Head of caudate nucleus (tissue), 42 donors: ENCODE measurements at regions of chr2 and their contacts with region 1.

Region 1: GRCh38 chr2:222860740-222861410 is at the start of gene ACSL3:
- DNase-seq: peak; percentile 96 to 99 (median 98)

Region 2: DNA sequence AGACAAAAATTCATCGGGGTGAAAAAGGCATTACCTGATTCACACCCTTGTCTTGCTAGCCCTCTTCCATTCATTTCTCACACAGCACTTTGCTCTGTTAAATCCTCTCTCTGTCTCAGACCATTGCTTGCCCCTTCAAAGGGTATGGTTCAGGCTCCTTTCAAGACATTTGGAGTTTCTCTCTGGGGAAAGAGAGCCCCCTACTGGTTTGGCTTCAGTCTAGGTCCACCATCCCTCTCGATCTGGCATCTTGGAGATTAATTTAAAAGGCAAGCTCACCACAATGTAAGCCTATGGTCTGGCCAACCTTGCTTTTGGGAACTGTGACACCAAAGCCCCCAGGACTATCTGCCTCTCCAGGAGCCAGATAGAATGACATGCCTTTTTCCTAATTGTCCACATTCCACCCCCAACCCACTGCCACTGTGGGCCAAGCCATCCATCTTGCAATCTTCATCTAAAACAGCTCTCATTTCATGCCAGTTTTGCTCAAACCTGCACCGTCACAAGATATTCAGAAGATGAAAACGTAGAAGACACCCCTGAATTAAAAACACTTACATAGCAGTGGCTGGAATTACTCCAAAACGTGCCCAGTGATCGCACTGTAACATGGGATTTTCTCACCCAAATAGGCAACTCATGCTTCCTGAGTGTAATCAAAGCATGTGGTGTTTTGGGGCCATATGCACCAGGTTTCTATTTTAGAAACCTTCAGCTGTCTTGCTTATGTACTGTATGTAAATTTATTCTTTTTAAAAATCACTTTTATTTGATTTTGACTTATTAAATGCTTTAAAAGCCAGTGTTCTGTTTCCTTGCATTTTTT is 298.8 kb before region 1 on chr2:
- intact Hi-C with region 1: no loop called
- DNase-seq: peak in 25 of 42 donors; percentile 9 to 73 (median 51)

Region 3: GRCh38 chr2:222797261-222797660 is 63.6 kb before region 1 on chr2:
- intact Hi-C with region 1: loop called (anchors 5 kb)
- DNase-seq: no peak

Region 4: DNA sequence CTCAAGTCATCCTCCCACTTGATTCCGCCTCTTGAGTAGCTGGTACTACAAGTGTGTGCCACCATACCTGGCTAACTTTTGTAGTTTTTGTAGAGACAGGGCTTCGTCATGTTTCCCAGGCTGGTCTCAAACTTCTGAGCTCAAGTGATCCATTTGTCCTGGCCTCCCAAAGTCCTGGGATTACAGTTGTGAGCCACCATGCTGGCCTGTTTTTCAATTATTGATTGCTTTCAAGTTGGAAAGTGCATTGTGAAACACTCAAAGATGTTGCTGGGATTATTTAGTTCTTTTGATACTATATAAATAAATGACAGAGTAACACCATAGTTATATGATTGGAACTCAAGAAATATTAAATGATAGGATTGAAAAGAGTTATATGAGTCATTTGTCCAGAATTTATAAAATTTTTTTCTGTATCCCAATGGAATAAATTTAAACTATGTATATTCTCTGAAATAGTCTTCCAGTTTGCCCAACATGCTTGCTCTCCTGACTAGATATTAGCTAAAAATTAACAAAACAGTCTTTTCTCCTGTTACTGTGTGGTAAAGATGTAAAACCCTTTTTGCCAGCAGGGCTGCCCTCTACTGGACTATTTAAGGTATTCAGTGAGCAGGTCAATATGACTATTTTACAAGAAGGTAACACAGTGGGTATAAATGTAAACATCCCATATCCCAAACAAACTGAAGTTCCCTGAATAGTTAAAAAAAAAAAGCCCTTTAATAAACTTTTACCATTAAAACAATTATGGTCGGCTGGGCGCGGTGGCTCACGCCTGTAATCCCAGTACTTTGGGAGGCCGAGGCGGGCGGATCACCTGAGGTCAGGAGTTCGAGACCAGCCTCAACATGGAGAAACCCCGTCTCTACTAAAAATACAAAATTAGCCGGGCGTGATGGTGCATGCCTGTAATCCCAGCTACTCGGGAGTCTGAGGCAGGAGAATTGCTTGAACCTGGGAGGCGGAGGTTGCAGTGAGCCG is 42.7 kb after region 1 on chr2:
- intact Hi-C with region 1: loop called (anchors 5 kb)
- DNase-seq: peak in 18 of 42 donors; percentile 33 to 73 (median 43)